Naive thymus-derived CD4-positive, alpha-beta T cell (primary cell): ENCODE measurements at regions of chr9 and their contacts with region 1.

Region 1: DNA sequence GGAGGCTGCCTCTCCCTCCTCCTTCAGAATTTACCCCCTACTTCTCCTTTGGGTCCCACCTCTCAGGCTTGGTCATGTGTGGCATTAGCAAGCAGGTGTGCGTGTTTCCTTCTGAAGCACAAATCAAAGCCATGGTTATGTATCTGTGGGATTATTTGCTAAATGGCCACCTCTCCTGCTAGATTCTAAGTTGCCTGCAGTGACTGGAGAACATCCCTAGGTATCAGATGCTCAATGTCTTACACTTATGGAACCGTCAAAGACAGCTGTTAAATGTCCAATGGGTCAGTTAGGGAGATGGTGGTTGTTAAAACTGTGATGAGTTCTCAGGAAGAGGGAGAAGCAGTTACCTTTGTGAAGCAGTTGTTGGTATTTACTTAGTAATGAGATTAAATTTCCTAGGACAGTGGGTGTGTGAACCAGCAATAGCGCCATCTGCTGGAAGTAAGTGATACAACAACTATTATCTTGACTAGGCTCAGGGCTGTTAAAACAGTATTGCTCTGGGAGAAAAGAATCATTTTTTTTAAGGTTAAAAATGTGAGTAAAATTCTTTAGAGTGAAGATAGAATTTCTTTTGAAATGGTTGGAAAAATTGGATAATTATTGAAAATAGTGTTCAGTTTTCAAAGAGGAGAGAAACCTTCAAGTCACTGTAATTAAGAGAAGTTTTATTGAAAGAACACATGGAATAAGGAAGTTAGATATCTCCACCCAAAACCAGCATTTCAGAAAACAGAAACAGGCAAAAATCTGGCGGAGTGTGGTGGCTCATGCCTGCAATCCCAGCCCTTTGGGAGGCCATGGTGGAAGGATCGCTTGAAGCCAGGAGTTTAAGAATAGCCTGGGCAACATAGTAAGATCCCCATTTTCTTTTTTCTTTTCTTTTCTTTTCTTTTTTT is 71.3 kb downstream of the TMC1 start:
- DNase-seq: peak in 7 of 9 donors; percentile 11 to 60 (median 47)
- ATAC-seq: peak; percentile 80
- H3K4me3 ChIP-seq: no peak overlapping the region
- H3K4me3 Mint-ChIP-seq: no peak overlapping the region
- H3K27ac ChIP-seq: no peak overlapping the region
- H3K27ac Mint-ChIP-seq: no peak overlapping the region
- H3K4me1 ChIP-seq: no peaks in the 10 kb centered on the region
- H3K4me1 Mint-ChIP-seq: peaks cover 0 to 50% (median 6%) of the 10 kb centered on the region in 7 donors
- H3K27me3 ChIP-seq: no peaks in the 10 kb centered on the region
- H3K27me3 Mint-ChIP-seq: peaks cover 0 to 5% (median 2%) of the 10 kb centered on the region in 5 donors

Region 2: DNA sequence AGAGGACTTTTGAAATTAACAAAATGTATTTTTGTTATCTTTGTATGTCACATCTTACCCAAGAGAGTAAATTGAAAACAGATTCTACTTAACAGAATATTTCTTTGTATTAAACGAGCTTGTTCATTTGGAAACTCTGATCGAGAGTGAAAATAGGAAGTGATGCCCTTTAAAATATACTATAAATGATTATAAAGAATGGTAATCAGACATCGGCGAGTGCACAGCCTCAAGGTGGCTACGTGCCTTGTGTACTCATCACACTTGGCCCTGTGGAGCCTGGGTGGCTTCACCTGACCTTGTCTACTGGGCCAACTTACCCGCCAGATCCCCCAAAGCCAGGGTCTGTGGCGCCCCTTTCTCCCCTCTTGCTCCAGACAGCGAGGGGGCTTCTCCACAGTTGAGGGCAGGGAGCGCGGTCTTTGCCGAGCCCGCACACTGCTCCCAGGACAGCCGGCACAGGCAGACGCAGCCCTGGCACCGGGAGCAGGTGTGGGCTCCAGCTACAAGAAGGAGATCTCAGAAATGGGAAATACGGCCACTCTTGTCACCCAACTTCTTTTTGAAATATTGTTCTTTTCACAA is 1067.7 kb before region 1 on chr9:
- CTCF ChIA-PET with region 1: no interaction called
- POLR2A ChIA-PET with region 1: no interaction called
- intact Hi-C with region 1: no loop called
- DNase-seq: no peak
- ATAC-seq: no peak
- H3K4me3 ChIP-seq: no peak overlapping the region
- H3K4me3 Mint-ChIP-seq: no peak overlapping the region
- H3K27ac ChIP-seq: no peak overlapping the region
- H3K27ac Mint-ChIP-seq: no peak overlapping the region
- H3K4me1 ChIP-seq: no peaks in the 10 kb centered on the region
- H3K4me1 Mint-ChIP-seq: peaks cover 0 to 2% (median 0%) of the 10 kb centered on the region in 7 donors
- H3K27me3 ChIP-seq: no peaks in the 10 kb centered on the region
- H3K27me3 Mint-ChIP-seq: peaks cover 5 to 38% (median 14%) of the 10 kb centered on the region in 5 donors

Region 3: DNA sequence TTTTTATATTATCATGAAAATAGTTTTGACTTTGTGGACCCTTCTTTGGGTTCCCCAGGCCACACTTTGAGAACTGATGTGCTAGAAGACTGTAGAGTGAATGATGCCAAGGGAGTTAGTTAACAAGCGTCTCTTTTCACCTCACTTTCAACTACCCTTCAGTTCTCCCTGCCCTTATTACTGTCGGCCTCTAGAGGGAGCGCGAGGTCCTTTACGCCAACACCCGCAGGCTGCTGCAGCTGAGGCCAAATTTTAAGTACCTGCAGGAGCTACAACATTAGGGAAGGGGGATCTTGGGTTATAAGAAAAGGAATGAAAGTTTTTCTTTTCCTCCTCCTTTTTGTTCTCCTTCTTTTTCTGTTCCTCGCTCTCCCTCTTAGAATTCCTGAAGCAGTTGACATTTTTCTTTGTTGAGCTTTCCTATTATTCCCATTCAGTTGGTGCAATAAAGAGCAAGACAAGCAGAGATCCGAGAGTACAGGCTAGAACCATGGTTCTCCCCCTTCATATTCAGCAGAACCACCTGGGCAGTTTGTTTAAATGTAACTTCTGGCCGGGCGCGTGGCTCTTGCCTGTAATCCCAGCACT is 311.7 kb before region 1 on chr9:
- CTCF ChIA-PET with region 1: interaction called, 25 read pairs
- POLR2A ChIA-PET with region 1: no interaction called
- intact Hi-C with region 1: loop called (anchors 1 kb)
- DNase-seq: peak; percentile 37 to 66 (median 58)
- ATAC-seq: peak; percentile 90
- H3K4me3 ChIP-seq: no peak overlapping the region
- H3K4me3 Mint-ChIP-seq: no peak overlapping the region
- H3K27ac ChIP-seq: no peak overlapping the region
- H3K27ac Mint-ChIP-seq: no peak overlapping the region
- H3K4me1 ChIP-seq: no peaks in the 10 kb centered on the region
- H3K4me1 Mint-ChIP-seq: peaks cover 0 to 3% (median 0%) of the 10 kb centered on the region in 7 donors
- H3K27me3 ChIP-seq: no peaks in the 10 kb centered on the region
- H3K27me3 Mint-ChIP-seq: peaks cover 0 to 12% (median 0%) of the 10 kb centered on the region in 5 donors

Region 4: GRCh38 chr9:72312386-72312987 is 280.3 kb before region 1 on chr9:
- CTCF ChIA-PET with region 1: no interaction called
- POLR2A ChIA-PET with region 1: no interaction called
- intact Hi-C with region 1: no loop called
- DNase-seq: no peak
- ATAC-seq: peak; percentile 38
- H3K4me3 ChIP-seq: no peak overlapping the region
- H3K4me3 Mint-ChIP-seq: no peak overlapping the region
- H3K27ac ChIP-seq: no peak overlapping the region
- H3K27ac Mint-ChIP-seq: no peak overlapping the region
- H3K4me1 ChIP-seq: no peaks in the 10 kb centered on the region
- H3K4me1 Mint-ChIP-seq: peaks cover 0 to 6% (median 0%) of the 10 kb centered on the region in 7 donors
- H3K27me3 ChIP-seq: no peaks in the 10 kb centered on the region
- H3K27me3 Mint-ChIP-seq: peaks cover 0 to 6% (median 0%) of the 10 kb centered on the region in 5 donors

Region 5: DNA sequence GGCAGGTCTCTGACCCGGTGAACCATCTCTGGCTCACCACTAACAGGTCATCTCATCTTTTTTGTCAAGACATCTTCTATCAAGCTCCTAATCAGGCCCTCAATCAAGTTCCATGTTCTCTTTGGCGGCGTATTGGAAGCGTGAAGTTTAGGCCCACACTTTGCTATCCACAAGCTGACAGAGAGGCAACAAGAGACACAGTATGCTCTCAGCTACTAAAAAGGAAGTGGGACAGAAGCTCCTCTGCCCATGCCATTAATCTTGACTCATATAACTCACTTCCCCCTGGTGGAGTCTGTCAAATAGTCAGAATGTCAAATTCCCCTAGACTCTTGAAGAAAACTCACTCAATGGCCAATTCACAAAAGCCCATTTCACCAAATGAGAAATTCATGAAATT is 148.9 kb before region 1 on chr9:
- CTCF ChIA-PET with region 1: no interaction called
- POLR2A ChIA-PET with region 1: interaction called, 4 read pairs
- intact Hi-C with region 1: loop called (anchors 1 kb)
- DNase-seq: no peak
- ATAC-seq: peak; percentile 80
- H3K4me3 ChIP-seq: no peak overlapping the region
- H3K4me3 Mint-ChIP-seq: peak overlapping the region in 2 of 10 donors; percentile 45 to 58
- H3K27ac ChIP-seq: no peak overlapping the region
- H3K27ac Mint-ChIP-seq: peak overlapping the region in 3 of 9 donors; percentile 28 to 80 (median 61)
- H3K4me1 ChIP-seq: peaks cover 0 to 11% of the 10 kb centered on the region in 2 donors
- H3K4me1 Mint-ChIP-seq: peaks cover 4 to 44% (median 14%) of the 10 kb centered on the region in 7 donors
- H3K27me3 ChIP-seq: no peaks in the 10 kb centered on the region
- H3K27me3 Mint-ChIP-seq: peaks cover 0 to 2% (median 0%) of the 10 kb centered on the region in 5 donors

Region 6: DNA sequence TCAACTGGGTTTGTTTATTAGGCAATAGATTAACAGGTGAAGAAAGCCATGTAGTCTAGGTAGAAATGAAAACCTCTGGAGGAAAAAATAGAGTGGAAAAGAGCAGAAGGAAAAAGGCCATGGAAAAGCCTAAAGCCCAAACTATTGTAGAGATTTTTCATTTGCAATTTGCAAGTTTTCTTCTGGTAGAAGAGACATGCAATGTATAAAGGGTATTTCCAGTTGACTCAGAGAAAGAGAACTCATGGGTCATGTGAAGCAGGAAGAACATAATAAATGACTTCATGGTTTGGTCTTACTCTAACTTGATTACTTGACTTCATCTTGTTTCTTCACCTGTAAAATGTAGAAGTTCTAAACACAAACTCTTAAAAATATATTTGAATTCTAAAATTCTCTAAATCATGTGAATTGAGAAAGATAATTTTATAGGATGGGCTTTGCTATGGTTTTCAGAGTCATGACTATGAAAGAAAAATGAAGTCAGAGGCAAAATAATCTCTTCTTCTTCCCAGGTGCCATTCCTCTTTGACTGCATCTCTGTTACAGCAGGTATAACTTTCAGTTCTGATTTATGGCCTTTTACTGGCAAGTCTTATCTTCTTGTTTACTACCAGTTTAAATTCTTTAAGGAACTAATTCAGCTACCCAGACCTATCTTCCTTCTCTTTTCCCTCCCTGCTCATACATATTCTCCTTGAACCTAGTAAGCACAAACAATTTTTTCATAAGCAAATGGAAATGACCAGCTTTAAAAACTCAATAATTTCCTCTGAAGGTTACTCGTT is 119.1 kb before region 1 on chr9:
- CTCF ChIA-PET with region 1: interaction called, 4 read pairs
- POLR2A ChIA-PET with region 1: no interaction called
- intact Hi-C with region 1: loop called in 1 of 2 experiments (anchors 5 kb)
- DNase-seq: no peak
- ATAC-seq: peak; percentile 62
- H3K4me3 ChIP-seq: no peak overlapping the region
- H3K4me3 Mint-ChIP-seq: peak overlapping the region in 1 of 10 donors; percentile 62
- H3K27ac ChIP-seq: no peak overlapping the region
- H3K27ac Mint-ChIP-seq: peak overlapping the region in 4 of 9 donors; percentile 63 to 88 (median 78)
- H3K4me1 ChIP-seq: peaks cover 0 to 6% of the 10 kb centered on the region in 2 donors
- H3K4me1 Mint-ChIP-seq: peaks cover 8 to 47% (median 13%) of the 10 kb centered on the region in 7 donors
- H3K27me3 ChIP-seq: no peaks in the 10 kb centered on the region
- H3K27me3 Mint-ChIP-seq: peaks cover 0 to 4% (median 0%) of the 10 kb centered on the region in 5 donors

Region 7: DNA sequence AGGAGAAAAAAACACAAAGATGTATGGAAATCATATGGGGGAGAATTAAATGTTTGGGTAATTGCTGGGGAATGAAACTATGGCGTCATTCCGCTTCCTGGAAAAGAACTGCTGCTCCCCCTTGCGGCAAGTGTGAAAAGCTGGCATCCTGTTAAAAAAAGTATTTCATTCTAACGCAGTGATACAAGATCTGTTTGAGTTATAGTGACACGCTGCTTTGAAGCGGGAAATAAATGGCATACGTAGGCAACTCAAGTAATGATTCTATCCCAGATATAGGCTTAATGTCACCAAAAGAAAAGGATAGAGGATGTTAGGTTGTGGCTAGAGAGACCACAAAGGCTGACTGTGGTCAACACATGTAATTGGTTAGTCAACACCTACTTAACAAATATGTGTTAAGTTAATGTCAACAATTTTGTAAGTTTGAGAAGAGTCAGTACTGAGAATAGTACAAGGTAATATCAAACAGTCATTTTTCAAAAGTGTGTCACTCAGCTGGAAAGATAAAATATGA is 430.3 kb after region 1 on chr9:
- CTCF ChIA-PET with region 1: no interaction called
- POLR2A ChIA-PET with region 1: no interaction called
- intact Hi-C with region 1: loop called in 1 of 2 experiments (anchors 2 kb)
- DNase-seq: peak in 5 of 9 donors; percentile 5 to 27 (median 19)
- ATAC-seq: peak; percentile 55
- H3K4me3 ChIP-seq: no peak overlapping the region
- H3K4me3 Mint-ChIP-seq: no peak overlapping the region
- H3K27ac ChIP-seq: no peak overlapping the region
- H3K27ac Mint-ChIP-seq: no peak overlapping the region
- H3K4me1 ChIP-seq: no peaks in the 10 kb centered on the region
- H3K4me1 Mint-ChIP-seq: peaks cover 0 to 10% (median 7%) of the 10 kb centered on the region in 7 donors
- H3K27me3 ChIP-seq: no peaks in the 10 kb centered on the region
- H3K27me3 Mint-ChIP-seq: peaks cover 16 to 36% (median 26%) of the 10 kb centered on the region in 5 donors